ENCODE measurements at regions of chr6 and their contacts with region 1.

Region 1: GRCh38 chr6:110815217-110816109 is at the start of gene CDK19:
- DNase-seq: peak; percentile 99
- H3K4me3 ChIP-seq: peak within 1 kb of the TSS; percentile 66 to 97 (median 93)
- H3K27ac ChIP-seq: peak within 1 kb of the TSS; percentile 95
- H3K4me1 ChIP-seq: peaks cover 22% of the 10 kb centered on the region
- H3K27me3 ChIP-seq: no peaks in the 10 kb centered on the region
- CTCF ChIP-seq: no peak
- total RNA-seq, gene CDK19: 8.7 to 8.8 TPM

Region 2: DNA sequence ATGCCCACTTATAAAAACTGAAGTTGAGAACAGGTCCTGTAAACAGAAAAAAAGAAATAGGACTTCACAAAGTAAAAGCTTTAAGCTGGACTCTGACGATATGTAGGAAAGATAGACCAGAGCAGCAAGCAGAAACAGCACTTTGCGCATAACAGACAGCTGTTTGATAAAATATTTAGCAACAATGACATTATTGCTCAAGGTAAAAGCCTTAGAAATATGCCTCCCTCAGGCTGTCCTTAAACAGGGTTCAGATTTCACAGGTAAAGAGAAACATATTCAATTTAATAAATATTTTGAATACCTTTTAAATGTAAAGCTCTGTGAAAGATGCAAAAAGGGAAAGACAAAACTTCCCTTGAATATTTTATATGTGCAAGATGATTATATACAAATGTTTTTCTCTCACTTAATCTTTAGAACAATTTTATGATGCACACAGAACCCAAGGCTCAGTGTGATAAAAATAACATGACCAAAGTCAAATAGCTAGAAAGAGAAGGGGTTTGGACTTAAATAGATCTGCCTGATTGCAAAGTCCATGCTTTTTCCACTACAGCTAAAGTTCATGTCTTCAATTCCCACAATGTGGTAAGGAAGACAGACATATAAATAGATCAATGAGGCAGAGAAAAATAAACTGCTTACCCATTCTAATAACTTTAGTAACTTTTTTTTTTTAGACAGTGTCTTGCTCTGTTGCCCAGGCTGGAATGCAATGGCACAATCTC is 144.2 kb before region 1 on chr6:
- CTCF ChIA-PET with region 1: no interaction called
- dilution Hi-C with region 1: loop called (anchors 10 kb)
- in situ Hi-C with region 1: no loop called
- intact Hi-C with region 1: no loop called
- DNase-seq: no peak
- H3K4me3 ChIP-seq: no peak overlapping the region
- H3K27ac ChIP-seq: no peak overlapping the region
- H3K4me1 ChIP-seq: no peaks in the 10 kb centered on the region
- H3K27me3 ChIP-seq: no peaks in the 10 kb centered on the region
- CTCF ChIP-seq: no peak

Region 3: GRCh38 chr6:110703010-110703905 is 112.2 kb before region 1 on chr6:
- CTCF ChIA-PET with region 1: no interaction called
- dilution Hi-C with region 1: no loop called
- in situ Hi-C with region 1: no loop called
- intact Hi-C with region 1: loop called (anchors 5 kb)
- DNase-seq: no peak
- H3K4me3 ChIP-seq: no peak overlapping the region
- H3K27ac ChIP-seq: no peak overlapping the region
- H3K4me1 ChIP-seq: peaks cover 13% of the 10 kb centered on the region
- H3K27me3 ChIP-seq: no peaks in the 10 kb centered on the region
- CTCF ChIP-seq: no peak

Region 4: DNA sequence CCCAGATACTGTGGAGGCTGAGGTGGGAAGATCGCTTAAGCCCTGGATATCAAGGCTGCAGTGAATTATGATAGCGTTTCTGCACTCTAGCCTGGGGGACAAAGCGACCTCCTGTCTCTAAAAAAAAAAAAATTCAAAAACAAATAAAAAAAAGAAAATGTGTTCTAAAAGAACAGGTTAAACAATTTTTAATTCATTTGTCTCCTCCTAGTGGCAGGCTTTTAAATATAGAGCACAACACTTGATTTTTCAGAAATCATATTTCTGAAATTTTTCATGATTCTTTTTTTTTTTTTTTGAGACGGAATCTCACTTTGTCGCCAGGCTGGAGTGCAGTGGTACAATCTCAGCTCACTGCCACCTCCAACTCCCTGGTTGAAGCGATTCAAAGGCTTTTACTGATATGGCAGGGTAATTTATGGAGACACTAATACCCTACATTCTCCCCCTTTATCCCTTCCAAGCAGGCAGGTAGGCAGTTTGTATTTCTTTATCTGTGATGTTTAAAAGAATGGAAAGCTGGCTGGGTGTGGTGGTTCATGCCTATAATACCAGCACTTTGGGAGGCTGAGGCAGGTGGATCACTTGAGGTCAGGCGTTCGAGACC is 134.3 kb after region 1 on chr6:
- CTCF ChIA-PET with region 1: no interaction called
- dilution Hi-C with region 1: no loop called
- in situ Hi-C with region 1: no loop called
- intact Hi-C with region 1: loop called (anchors 2 kb)
- DNase-seq: no peak
- H3K4me3 ChIP-seq: no peak overlapping the region
- H3K27ac ChIP-seq: no peak overlapping the region
- H3K4me1 ChIP-seq: peaks cover 22% of the 10 kb centered on the region
- H3K27me3 ChIP-seq: no peaks in the 10 kb centered on the region
- CTCF ChIP-seq: peak; percentile 37 to 51